Endothelial cell of umbilical vein (primary cell): ENCODE measurements at regions of chr6 and their contacts with region 1.

Region 1: DNA sequence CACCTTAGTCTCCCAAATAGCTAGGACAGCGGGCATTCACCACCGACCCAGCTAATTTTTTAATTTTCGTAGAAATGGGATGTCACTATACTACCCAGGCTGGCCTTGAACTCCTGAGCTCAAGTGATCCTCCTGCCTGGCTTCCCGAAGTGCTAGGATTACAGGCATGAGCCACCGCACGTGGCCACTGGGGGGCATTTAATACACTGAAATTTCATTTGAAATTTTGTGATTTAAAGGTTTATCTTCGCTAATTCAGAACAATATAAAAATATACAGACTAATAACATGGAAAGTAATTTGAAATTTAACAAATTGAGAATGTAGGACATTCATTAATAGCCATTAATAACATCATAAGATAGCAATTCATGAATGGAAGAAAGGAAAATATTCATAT is 20.5 kb upstream of the TBC1D32 start:
- DNase-seq: no peak
- H3K4me3 ChIP-seq: no peak overlapping the region
- H3K27ac ChIP-seq: no peak overlapping the region
- H3K4me1 ChIP-seq: no peaks in the 10 kb centered on the region
- H3K27me3 ChIP-seq: peaks cover 0 to 1% of the 10 kb centered on the region in 2 experiments
- CTCF ChIP-seq: peak; percentile 29 to 33
- POLR2A ChIP-seq: no peak

Region 2: DNA sequence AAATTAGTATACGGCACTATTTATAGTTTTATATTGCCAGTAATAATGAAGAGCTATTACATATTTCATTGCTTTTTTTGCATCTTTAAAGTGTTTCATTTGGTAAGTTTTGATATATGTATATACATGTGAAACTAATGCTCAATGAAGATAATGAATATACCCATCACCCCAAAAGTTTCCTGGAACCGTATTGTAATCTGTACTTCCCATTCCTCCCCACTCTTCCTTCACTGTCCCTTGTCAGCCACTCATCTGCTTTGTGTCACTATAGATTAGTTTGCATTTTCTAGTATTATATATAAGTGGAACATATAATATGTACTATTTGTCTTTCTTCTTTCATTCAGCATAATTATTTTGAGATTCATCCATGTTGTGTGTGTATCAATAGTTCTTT is 10.2 kb before region 1 on chr6:
- CTCF ChIA-PET with region 1: interaction called, 10 read pairs
- POLR2A ChIA-PET with region 1: no interaction called
- dilution Hi-C with region 1: no loop called
- intact Hi-C with region 1: no loop called
- DNase-seq: no peak
- H3K4me3 ChIP-seq: no peak overlapping the region
- H3K27ac ChIP-seq: no peak overlapping the region
- H3K4me1 ChIP-seq: no peaks in the 10 kb centered on the region
- H3K27me3 ChIP-seq: no peaks in the 10 kb centered on the region
- CTCF ChIP-seq: no peak
- POLR2A ChIP-seq: no peak

Region 3: GRCh38 chr6:122033539-122034181 is 678.9 kb after region 1 on chr6:
- CTCF ChIA-PET with region 1: interaction called, 3 read pairs
- POLR2A ChIA-PET with region 1: no interaction called
- dilution Hi-C with region 1: no loop called
- intact Hi-C with region 1: loop called (anchors 5 kb)
- DNase-seq: peak; percentile 69
- H3K4me3 ChIP-seq: no peak overlapping the region
- H3K27ac ChIP-seq: no peak overlapping the region
- H3K4me1 ChIP-seq: no peaks in the 10 kb centered on the region
- H3K27me3 ChIP-seq: no peaks in the 10 kb centered on the region
- CTCF ChIP-seq: peak; percentile 35 to 51
- POLR2A ChIP-seq: no peak